ENCODE measurements at regions of chr13 and their contacts with region 1.

Region 1: DNA sequence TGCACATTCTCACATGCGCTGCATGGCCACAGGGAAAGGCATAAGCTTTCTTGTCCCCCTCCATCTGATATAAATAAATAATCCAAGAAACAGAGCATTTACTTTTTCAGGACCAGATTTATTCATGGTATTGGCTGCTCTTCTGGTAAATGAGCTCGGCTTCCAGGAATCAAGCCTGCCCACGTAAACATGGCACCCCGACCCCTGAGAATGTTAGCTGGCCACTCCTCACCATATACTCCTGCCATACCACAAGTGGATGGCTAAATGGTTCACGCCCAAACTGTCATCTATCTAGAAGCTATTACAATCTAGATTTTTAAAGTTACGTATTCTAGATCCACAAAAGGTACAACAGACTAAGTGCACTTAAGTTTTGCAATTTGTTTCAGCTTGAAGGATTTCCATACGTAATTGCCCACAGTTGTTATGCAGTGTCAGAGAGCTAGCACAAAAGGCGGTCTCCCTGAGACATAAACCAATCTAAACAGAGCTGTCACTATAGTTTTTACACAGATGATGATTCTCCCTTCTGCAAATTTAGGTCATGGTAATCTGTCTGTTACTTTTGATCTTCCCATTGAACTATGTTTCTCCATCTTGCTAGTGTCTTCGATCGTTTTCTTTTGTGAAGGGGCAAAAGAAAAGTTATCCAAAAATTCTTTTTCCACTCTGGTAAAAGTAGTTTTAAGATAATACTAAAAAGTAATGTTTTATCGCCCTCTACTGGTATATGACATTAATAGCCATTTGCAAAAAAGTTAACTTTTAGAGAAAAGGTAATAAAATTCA is 16.2 kb upstream of the FOXO1 start:
- H3K4me3 ChIP-seq: no peak overlapping the region
- H3K27ac ChIP-seq: no peak overlapping the region
- H3K4me1 ChIP-seq: no peaks in the 10 kb centered on the region
- CTCF ChIP-seq: no peak

Region 2: DNA sequence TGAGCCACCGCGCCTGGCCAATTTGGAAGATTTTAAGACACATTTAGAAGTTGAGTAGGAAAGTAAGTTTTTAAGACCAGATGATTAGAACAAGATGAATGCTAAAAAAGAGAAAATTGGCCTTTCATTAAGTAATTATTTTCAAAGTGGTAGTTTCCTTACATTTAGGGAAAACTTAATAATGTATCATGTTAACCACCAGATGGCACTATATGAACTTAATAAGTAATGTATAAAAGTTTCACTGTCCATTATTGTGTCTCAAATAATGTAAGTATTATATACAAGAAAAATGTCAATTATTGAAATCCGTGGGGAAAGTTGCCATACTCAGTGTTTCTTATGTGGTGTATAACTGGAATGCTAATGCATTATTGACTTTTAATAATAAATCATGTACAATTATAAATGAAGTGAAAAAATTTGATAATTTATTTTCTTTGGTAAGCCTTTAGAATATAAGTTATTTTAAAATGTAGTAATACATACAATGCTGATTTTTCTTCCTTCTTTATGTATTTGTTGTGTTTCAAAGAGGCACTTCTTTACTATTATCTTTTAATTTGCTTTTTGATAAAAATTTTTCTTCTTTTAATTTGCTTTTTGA is 998.0 kb before region 1 on chr13:
- CTCF ChIA-PET with region 1: interaction called, 14 read pairs
- POLR2A ChIA-PET with region 1: no interaction called
- H3K4me3 ChIP-seq: no peak overlapping the region
- H3K27ac ChIP-seq: no peak overlapping the region
- H3K4me1 ChIP-seq: no peaks in the 10 kb centered on the region
- CTCF ChIP-seq: no peak

Region 3: DNA sequence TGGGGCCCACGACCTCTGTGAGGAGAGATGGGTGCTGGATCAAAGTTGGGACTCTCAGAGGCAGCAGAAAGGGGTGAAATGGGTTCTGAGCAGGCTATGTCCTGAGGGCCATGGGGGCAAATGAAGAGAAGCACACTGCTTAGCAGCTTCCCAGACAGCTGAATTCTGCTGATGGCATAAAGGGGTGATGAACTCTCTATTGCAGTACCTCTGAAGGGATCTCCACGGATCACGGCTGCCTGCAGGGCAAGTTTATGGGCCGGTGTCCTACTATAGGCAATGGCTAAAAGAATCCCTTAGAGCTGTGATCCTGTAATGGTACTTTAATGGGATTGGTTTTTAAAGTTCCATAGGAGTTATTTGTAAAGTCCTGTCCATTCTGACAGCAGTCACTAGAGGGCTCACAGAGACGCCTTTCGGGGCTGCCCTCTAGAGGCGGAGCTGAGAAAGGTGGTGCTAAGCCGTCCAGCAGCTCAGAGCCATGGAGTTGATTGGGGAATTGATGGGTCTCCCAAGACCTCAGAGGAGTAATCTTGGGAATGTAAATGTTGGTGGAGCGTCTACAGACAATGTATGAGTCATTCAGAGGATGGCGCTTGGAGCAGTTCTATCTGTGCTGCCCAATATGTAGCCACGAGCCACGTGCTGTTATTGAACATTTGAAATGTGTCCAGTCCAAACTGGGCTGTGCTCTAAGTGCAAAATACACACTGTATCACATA is 739.9 kb before region 1 on chr13:
- CTCF ChIA-PET with region 1: interaction called, 10 read pairs
- POLR2A ChIA-PET with region 1: no interaction called
- H3K4me3 ChIP-seq: no peak overlapping the region
- H3K27ac ChIP-seq: no peak overlapping the region
- H3K4me1 ChIP-seq: no peaks in the 10 kb centered on the region
- CTCF ChIP-seq: peak; percentile 73

Region 4: GRCh38 chr13:40069173-40070044 is 613.2 kb before region 1 on chr13:
- CTCF ChIA-PET with region 1: interaction called, 11 read pairs
- POLR2A ChIA-PET with region 1: no interaction called
- H3K4me3 ChIP-seq: no peak overlapping the region
- H3K27ac ChIP-seq: no peak overlapping the region
- H3K4me1 ChIP-seq: peaks cover 4% of the 10 kb centered on the region
- CTCF ChIP-seq: no peak

Measured in HEK293 (cell line).